ENCODE measurements at regions of chr12 and their contacts with region 1.

Region 1: GRCh38 chr12:74963867-74964331 is 245.7 kb downstream of the KCNC2 start:
- DNase-seq: no peak
- ATAC-seq: no peak
- H3K4me3 ChIP-seq: no peak overlapping the region
- H3K27ac ChIP-seq: no peak overlapping the region
- H3K4me1 ChIP-seq: no peaks in the 10 kb centered on the region
- H3K27me3 ChIP-seq: no peaks in the 10 kb centered on the region
- CTCF ChIP-seq: no peak
- POLR2A ChIP-seq: no peak
- RAD21 ChIP-seq: no peak

Region 2: DNA sequence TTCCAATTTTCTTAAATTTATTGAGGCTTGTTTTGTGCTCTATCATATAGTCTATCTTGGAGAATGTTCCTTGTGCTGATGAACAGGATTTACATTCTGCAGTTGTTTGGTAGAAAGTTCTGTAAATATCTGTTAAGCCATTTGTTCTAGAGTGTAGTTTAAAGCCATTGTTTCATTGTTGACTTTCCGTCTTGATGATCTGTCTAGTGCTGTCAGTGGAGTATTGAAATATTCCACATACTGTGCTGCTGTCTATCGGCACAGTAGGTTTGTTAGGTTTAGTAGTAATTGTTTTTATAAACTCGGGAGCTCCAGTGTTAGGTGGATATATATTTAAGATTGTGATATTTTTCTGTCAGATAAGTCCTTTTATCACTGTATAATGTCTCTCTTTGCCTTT is 204.2 kb before region 1 on chr12:
- CTCF ChIA-PET with region 1: no interaction called
- POLR2A ChIA-PET with region 1: no interaction called
- dilution Hi-C with region 1: no loop called
- in situ Hi-C with region 1: no loop called
- intact Hi-C with region 1: loop called (anchors 5 kb)
- DNase-seq: no peak
- ATAC-seq: no peak
- H3K4me3 ChIP-seq: no peak overlapping the region
- H3K27ac ChIP-seq: no peak overlapping the region
- H3K4me1 ChIP-seq: no peaks in the 10 kb centered on the region
- H3K27me3 ChIP-seq: no peaks in the 10 kb centered on the region
- CTCF ChIP-seq: no peak
- POLR2A ChIP-seq: no peak
- RAD21 ChIP-seq: no peak

Region 3: GRCh38 chr12:74903522-74903921 is 60.4 kb before region 1 on chr12:
- CTCF ChIA-PET with region 1: no interaction called
- POLR2A ChIA-PET with region 1: no interaction called
- dilution Hi-C with region 1: no loop called
- in situ Hi-C with region 1: no loop called
- intact Hi-C with region 1: no loop called
- DNase-seq: no peak
- ATAC-seq: no peak
- H3K4me3 ChIP-seq: no peak overlapping the region
- H3K27ac ChIP-seq: no peak overlapping the region
- H3K4me1 ChIP-seq: 0 out of 2 replicates have a peak, but pooled peaks cover 2% of the 10 kb centered on the region
- H3K27me3 ChIP-seq: no peaks in the 10 kb centered on the region
- CTCF ChIP-seq: 0 out of 2 replicates have a peak, but pooled peaks have one; percentile 8
- POLR2A ChIP-seq: no peak
- RAD21 ChIP-seq: no peak

Region 4: DNA sequence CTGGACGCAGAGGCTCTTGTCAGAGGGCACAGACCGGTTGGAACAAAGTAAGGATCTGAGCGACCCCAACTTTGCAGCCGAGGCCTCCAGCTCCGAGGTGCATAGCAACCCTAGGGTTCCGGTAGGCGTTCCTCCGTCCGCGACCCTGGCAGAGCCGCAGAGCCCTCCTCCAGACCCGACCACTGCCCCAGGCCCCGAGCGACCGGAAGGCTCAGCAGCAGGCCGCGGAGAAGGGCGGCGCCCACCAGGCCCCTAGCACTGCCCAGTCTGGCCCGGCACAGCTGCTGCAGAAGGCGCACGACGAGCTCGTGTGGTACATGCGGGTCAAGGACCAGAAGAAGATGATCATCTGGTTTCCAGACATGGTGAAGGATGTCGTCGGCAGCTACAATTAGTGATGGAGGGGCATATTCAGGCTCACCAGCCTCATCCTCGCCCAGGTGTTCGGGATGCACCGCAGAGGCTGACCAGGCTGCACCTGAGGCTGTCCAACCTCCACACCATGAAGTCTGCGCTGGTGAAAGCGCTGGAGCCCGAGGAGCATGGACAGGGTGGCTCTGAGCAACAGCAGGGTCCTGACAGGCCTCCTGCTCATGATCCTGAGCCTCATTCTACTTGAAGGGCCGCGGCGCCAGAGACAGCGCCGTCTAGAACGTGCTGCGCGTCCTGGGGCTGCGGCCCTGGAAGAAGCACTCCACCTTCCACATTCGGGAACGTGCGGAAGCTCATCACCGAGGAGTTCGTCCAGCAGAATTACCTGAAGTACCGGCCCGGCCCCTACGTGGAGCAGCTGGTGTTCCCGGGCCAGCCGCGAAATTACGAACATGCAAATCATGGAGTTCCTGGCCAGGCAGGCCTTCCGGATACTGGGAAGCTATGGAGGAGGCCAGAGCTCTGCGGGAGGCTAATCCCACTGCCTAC is 341.8 kb after region 1 on chr12:
- CTCF ChIA-PET with region 1: no interaction called
- POLR2A ChIA-PET with region 1: no interaction called
- dilution Hi-C with region 1: no loop called
- in situ Hi-C with region 1: no loop called
- intact Hi-C with region 1: no loop called
- DNase-seq: no peak
- ATAC-seq: no peak
- H3K4me3 ChIP-seq: no peak overlapping the region
- H3K27ac ChIP-seq: no peak overlapping the region
- H3K4me1 ChIP-seq: no peaks in the 10 kb centered on the region
- H3K27me3 ChIP-seq: no peaks in the 10 kb centered on the region
- CTCF ChIP-seq: no peak
- POLR2A ChIP-seq: no peak
- RAD21 ChIP-seq: no peak